RWPE1 (cell line): ENCODE measurements at regions of chr1 and their contacts with region 1.

Region 1: GRCh38 chr1:30779294-30780071 is 21.9 kb upstream of the LAPTM5 start:
- DNase-seq: peak; percentile 61
- H3K27ac ChIP-seq: no peak overlapping the region
- CTCF ChIP-seq: peak; percentile 92

Region 2: GRCh38 chr1:30718636-30719405 is 60.7 kb before region 1 on chr1:
- CTCF ChIA-PET with region 1: interaction called, 63 read pairs
- POLR2A ChIA-PET with region 1: interaction called, 12 read pairs
- DNase-seq: peak; percentile 54
- H3K27ac ChIP-seq: peak overlapping the region; percentile 90
- CTCF ChIP-seq: peak; percentile 88

Region 3: GRCh38 chr1:30929135-30929889 is 149.8 kb after region 1 on chr1:
- CTCF ChIA-PET with region 1: interaction called, 12 read pairs
- POLR2A ChIA-PET with region 1: no interaction called
- DNase-seq: peak; percentile 48
- H3K27ac ChIP-seq: peak overlapping the region; percentile 44
- CTCF ChIP-seq: peak; percentile 76